ENCODE measurements at regions of chr15 and their contacts with region 1.

Region 1: DNA sequence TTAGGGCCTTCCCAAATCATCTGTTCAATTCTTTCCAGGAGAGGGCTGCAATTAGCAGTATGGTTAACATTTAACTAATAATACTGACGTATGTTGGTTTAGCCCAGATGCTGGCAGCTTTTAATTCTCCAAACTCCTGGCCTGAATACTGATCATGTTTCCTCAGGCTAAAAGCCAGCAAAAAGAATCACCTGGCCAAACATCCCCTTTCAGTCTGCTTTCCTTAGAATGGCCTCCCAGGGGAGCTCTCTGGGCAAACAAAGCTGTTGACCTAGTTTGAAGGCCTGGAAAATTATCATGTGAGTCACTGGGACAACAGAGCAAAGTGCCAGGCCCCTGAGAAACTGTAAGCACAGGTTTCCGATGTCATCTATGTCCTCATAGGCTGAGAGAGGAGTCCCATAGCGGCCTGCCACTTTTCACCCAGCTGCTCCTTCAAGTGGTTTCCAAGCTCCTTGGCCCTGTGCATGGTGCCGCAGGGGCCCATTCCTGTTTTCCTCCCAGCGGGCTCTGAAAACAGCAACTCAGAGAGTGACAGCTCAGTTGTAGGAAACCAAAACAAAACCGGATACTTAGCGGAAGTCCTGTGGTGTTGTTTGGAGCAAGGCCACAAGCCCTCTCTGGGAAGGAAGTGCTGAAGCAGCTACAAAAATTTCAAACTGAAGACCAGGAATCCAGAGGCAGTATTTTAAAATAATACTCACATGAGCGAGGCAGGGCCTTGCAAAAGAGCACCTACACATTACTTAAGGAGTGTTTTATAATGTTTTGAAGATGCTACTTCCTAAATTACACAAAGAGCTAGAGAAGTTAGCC is 36.5 kb upstream of the RAB11A start:
- DNase-seq: peak; percentile 67
- ATAC-seq: peak; percentile 62
- H3K4me3 Mint-ChIP-seq: peak overlapping the region; percentile 66
- H3K27ac Mint-ChIP-seq: peak overlapping the region; percentile 93
- H3K4me1 Mint-ChIP-seq: peaks cover 50% of the 10 kb centered on the region
- H3K27me3 Mint-ChIP-seq: no peaks in the 10 kb centered on the region

Region 2: DNA sequence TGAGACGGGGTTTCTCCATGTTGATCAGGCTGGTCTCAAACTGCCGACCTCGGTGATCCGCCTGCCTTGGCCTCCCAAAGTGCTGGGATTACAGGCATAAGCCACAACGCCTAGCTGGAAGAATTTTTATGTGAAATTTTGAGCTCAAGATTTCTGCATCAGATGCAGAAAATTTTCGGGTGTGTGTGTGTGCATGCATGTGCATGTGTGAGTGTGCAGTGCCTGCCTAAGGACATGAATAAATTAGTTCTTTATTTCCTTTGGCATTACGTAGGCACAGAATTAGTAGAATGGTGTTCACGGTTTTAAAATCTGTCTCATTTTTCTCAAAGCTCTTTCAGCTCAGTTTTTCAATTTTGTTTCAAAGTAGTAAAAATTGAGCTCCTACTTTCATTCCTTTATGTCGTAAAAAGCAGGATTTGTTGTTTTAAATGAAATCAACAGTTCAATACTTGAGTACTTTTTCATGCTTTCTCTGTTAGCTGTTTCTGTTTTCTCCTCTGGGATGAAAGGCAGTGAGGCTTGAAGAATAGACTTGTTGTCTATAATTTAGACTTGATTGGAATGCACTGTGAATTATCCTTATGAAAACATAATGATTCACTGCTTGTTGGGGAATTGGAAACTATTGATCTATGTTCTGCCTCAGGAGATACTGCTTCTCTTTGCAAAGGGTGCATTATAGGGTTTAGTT is 13.2 kb after region 1 on chr15:
- CTCF ChIA-PET with region 1: interaction called, 12 read pairs
- POLR2A ChIA-PET with region 1: no interaction called
- intact Hi-C with region 1: no loop called
- DNase-seq: no peak
- ATAC-seq: no peak
- H3K4me3 Mint-ChIP-seq: no peak overlapping the region
- H3K27ac Mint-ChIP-seq: no peak overlapping the region
- H3K4me1 Mint-ChIP-seq: no peaks in the 10 kb centered on the region
- H3K27me3 Mint-ChIP-seq: no peaks in the 10 kb centered on the region

Region 3: GRCh38 chr15:65856821-65857455 is 24.2 kb after region 1 on chr15:
- CTCF ChIA-PET with region 1: interaction called, 15 read pairs
- POLR2A ChIA-PET with region 1: no interaction called
- intact Hi-C with region 1: no loop called
- DNase-seq: peak; percentile 90
- ATAC-seq: peak; percentile 72
- H3K4me3 Mint-ChIP-seq: no peak overlapping the region
- H3K27ac Mint-ChIP-seq: no peak overlapping the region
- H3K4me1 Mint-ChIP-seq: peaks cover 14% of the 10 kb centered on the region
- H3K27me3 Mint-ChIP-seq: no peaks in the 10 kb centered on the region

Region 4: GRCh38 chr15:65862682-65863081 is 29.9 kb after region 1 on chr15:
- CTCF ChIA-PET with region 1: interaction called, 15 read pairs
- POLR2A ChIA-PET with region 1: no interaction called
- intact Hi-C with region 1: loop called in 1 of 2 experiments (anchors 5 kb)
- DNase-seq: peak; percentile 85
- ATAC-seq: peak; percentile 99
- H3K4me3 Mint-ChIP-seq: no peak overlapping the region
- H3K27ac Mint-ChIP-seq: no peak overlapping the region
- H3K4me1 Mint-ChIP-seq: peaks cover 15% of the 10 kb centered on the region
- H3K27me3 Mint-ChIP-seq: no peaks in the 10 kb centered on the region

Measured in activated CD4-positive, alpha-beta T cell treated with anti-CD3 and anti-CD28 coated beads for 36 hours (primary cell).